Activated B cell treated with CpG ODN at 0.5 μM for 24 hours (primary cell): ENCODE measurements at regions of chr7 and their contacts with region 1.

Region 1: DNA sequence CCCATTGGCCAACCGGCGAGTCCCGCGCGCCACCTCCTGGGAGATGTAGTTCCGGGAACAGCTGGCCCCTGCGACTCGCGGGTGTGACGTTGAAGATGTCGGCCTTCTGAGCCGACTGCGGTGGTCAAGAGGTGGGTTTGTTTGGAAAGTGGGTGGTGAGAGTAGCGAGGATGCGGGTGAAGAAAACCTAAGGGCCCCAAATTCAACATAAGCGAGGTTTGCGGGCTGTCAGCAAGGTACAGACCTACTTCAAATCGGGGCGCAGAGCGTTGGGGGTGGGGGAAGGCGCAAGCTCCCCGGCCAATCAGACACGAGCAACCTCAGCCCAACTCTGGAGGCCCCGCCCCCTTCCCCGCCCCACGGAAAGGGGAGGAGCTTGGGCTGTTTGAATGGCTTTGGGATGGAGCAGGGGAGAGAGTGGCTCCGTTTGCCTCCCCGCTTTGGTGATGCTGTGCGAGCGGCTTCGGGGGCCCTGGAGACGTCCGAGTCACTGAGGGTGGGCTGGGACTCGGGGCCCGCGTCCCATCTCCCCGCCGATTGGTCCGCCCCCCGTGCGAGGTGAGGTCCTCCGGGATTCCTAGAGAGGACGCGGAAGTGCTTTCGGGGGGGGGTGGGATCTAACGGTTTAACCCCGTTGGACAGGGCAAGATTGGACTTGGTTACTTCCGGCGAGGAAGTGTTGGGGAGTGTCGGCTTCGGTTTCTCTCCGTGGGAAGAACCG is at the start of gene ZKSCAN5:
- DNase-seq: peak; percentile 93
- ATAC-seq: peak; percentile 84
- H3K4me3 Mint-ChIP-seq: peak within 1 kb of the TSS; percentile 98
- H3K27ac Mint-ChIP-seq: peak within 1 kb of the TSS; percentile 98
- H3K4me1 Mint-ChIP-seq: peaks cover 38% of the 10 kb centered on the region
- H3K27me3 Mint-ChIP-seq: no peaks in the 10 kb centered on the region
- CTCF ChIP-seq: no peak
- total RNA-seq, gene ZKSCAN5: 9.5 and 10.3 TPM in 2 replicates

Region 2: DNA sequence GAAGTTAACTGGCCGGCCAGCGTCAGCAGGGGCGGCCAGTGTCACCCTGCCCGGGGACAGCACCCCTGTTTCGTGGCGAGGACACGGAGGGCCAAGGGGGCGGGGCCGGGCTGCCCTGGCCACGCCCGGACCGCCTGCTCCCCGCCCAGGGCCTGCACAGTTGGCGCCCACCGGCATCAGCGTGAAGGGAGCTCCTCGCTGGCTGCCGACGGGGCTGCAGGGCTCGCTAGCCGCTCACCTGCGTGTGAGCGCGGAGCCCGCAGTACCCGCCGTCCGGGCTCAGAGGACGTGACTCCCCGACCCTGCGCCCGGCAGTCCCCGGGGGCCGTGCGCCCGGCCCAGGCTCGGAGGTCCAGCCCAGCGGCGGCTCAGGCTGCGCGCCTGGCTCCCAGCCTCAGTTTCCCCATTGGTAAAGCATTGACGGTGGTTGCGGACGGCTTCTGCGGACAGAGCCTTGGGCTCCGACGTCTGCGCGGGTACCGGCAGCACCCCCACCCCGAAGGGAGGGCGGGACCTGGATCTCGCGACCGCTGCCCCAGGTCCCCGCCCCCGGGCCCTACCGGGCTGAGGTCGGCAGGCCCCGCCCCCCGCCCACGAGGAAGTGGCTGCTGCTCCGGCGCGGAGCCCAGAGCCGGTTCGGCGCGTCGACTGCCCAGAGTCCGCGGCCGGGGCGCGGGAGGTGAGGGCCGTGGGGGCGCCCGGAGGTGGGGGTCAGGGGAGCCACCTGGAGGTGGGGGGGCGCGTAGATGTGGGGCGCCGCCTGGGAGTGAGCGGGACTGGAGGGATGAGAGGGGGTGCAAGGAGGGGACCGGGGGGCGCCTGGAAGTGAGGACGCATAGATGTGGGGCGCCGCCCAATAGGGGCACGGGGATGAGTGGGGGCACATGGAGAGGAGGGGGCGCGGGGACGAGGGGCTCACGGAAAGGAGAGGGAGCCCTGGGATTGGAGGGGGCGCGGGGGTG is 130.4 kb before region 1 on chr7 and contains the start of gene ARPC1B:
- CTCF ChIA-PET with region 1: no interaction called
- POLR2A ChIA-PET with region 1: interaction called, 6 read pairs
- intact Hi-C with region 1: loop called (anchors 2 kb)
- DNase-seq: peak; percentile 78
- ATAC-seq: peak; percentile 74
- H3K4me3 Mint-ChIP-seq: peak within 1 kb of the TSS; percentile 83
- H3K27ac Mint-ChIP-seq: peak within 1 kb of the TSS; percentile 79
- H3K4me1 Mint-ChIP-seq: peaks cover 33% of the 10 kb centered on the region
- H3K27me3 Mint-ChIP-seq: no peaks in the 10 kb centered on the region
- CTCF ChIP-seq: no peak
- total RNA-seq, gene ARPC1B: 300 and 312 TPM in 2 replicates

Region 3: DNA sequence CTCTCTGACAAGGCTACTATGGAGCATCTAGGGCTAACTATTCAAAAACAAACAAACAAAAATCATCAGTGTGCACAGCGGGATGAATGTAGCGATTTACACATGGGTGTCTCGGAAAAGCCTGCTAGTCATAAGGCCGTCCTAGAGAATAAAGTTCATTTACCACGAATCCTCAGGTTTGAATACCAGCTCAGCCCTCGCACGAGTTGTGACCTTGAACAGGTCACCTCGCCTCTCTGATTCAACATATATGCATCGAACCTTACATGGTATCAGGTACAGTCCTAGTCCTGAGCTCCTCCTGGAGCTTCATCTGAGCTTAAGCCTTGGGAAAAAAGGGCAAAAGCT is 39.4 kb before region 1 on chr7:
- CTCF ChIA-PET with region 1: no interaction called
- POLR2A ChIA-PET with region 1: interaction called, 26 read pairs
- intact Hi-C with region 1: loop called (anchors 1 kb)
- DNase-seq: no peak
- ATAC-seq: no peak
- H3K4me3 Mint-ChIP-seq: peak overlapping the region; percentile 96
- H3K27ac Mint-ChIP-seq: peak overlapping the region; percentile 90
- H3K4me1 Mint-ChIP-seq: peaks cover 36% of the 10 kb centered on the region
- H3K27me3 Mint-ChIP-seq: no peaks in the 10 kb centered on the region
- CTCF ChIP-seq: no peak

Region 4: DNA sequence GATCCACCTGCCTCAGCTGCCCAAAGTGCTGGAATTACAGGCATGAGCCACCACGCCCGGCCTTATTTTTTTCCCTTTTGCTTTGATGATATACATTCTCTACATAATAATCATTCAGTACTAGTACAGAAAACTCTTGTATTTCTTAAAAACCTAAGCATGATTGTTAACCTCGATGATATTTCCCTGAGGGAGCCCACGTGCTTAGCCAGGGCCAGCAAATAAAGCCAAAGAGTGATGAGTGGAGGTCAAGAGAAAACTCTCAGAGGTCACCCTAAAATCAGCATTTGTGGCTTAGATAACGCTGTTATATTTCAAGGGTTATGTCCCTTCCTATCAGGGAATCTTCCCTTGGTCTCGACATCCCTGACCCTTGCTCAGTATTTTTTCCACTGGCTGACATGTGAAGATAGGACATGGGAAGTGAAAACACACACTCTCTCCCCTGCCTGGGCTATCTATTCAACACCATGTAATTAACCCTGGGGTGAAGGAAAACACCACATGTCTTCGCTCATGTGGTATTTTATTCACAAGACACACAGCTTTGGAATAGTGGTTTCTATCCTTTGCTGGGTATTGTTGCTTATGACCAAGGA is 34.5 kb after region 1 on chr7:
- CTCF ChIA-PET with region 1: no interaction called
- POLR2A ChIA-PET with region 1: no interaction called
- intact Hi-C with region 1: no loop called
- DNase-seq: no peak
- ATAC-seq: no peak
- H3K4me3 Mint-ChIP-seq: no peak overlapping the region
- H3K27ac Mint-ChIP-seq: no peak overlapping the region
- H3K4me1 Mint-ChIP-seq: no peaks in the 10 kb centered on the region
- H3K27me3 Mint-ChIP-seq: no peaks in the 10 kb centered on the region
- CTCF ChIP-seq: no peak

Region 5: GRCh38 chr7:99551767-99552463 is 47.2 kb after region 1 on chr7 and contains the start of gene FAM200A:
- CTCF ChIA-PET with region 1: interaction called, 3 read pairs
- POLR2A ChIA-PET with region 1: interaction called, 69 read pairs
- intact Hi-C with region 1: loop called (anchors 1 kb)
- DNase-seq: peak; percentile 78
- ATAC-seq: peak; percentile 98
- H3K4me3 Mint-ChIP-seq: peak within 1 kb of the TSS; percentile 91
- H3K27ac Mint-ChIP-seq: peak within 1 kb of the TSS; percentile 87
- H3K4me1 Mint-ChIP-seq: peaks cover 33% of the 10 kb centered on the region
- H3K27me3 Mint-ChIP-seq: no peaks in the 10 kb centered on the region
- CTCF ChIP-seq: no peak
- total RNA-seq, gene FAM200A: 9.2 and 9.3 TPM in 2 replicates

Region 6: DNA sequence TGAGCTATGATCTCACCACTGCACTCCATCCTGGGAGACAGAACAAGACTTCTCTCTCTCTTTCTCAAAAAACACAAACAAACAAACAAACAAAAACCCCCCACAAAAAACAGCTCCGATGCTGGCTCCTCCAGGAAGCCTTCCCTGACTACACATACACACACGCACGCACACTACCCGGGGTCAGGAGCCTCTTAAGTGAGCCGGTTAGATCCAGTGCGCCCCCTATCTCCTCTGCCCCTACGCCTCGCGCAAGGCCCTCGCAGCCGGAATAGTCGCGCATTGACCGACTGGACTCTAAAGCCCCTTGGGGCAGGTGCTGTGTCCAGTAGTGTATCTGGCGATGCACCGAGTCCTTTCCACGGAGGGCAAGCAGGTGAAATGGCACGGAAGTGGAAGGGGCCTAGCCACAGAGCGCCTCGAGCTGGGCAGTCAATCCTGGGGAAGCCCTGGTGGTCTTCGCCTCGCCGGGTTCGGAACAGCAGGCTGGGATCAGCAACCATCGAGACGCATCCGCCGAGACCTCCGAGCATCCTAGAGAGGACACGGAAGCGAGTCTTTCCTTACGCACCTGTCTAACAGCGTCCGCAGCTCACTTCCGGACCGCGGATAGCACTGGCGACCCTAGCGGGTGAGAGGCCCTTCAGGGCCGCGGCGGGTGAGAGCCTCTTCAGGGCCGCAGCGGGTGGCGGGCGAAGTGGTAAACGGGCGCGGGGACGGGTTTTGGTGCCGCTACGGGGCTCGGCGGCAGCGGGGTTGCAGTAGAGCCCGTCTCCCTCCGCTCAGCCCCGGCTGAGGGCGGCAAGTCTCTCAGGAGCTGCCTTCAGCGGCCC is 111.8 kb after region 1 on chr7 and contains the start of gene ZSCAN25:
- CTCF ChIA-PET with region 1: interaction called, 4 read pairs
- POLR2A ChIA-PET with region 1: interaction called, 15 read pairs
- intact Hi-C with region 1: loop called (anchors 1 kb)
- DNase-seq: peak; percentile 78
- ATAC-seq: peak; percentile 95
- H3K4me3 Mint-ChIP-seq: peak within 1 kb of the TSS; percentile 97
- H3K27ac Mint-ChIP-seq: peak within 1 kb of the TSS; percentile 90
- H3K4me1 Mint-ChIP-seq: peaks cover 30% of the 10 kb centered on the region
- H3K27me3 Mint-ChIP-seq: no peaks in the 10 kb centered on the region
- CTCF ChIP-seq: no peak
- total RNA-seq, gene ZSCAN25: 28.5 and 33.4 TPM in 2 replicates

Region 7: GRCh38 chr7:99740573-99741440 is 236.0 kb after region 1 on chr7:
- CTCF ChIA-PET with region 1: no interaction called
- POLR2A ChIA-PET with region 1: no interaction called
- intact Hi-C with region 1: no loop called
- DNase-seq: no peak
- ATAC-seq: no peak
- H3K4me3 Mint-ChIP-seq: no peak overlapping the region
- H3K27ac Mint-ChIP-seq: no peak overlapping the region
- H3K4me1 Mint-ChIP-seq: no peaks in the 10 kb centered on the region
- H3K27me3 Mint-ChIP-seq: peaks cover 36% of the 10 kb centered on the region
- CTCF ChIP-seq: no peak

Region 8: GRCh38 chr7:100015232-100016209 is 510.8 kb after region 1 on chr7 and contains the start of gene ZKSCAN1:
- CTCF ChIA-PET with region 1: no interaction called
- POLR2A ChIA-PET with region 1: interaction called, 3 read pairs
- intact Hi-C with region 1: loop called (anchors 2 kb)
- DNase-seq: peak; percentile 76
- ATAC-seq: peak; percentile 97
- H3K4me3 Mint-ChIP-seq: peak within 1 kb of the TSS; percentile 90
- H3K27ac Mint-ChIP-seq: peak within 1 kb of the TSS; percentile 84
- H3K4me1 Mint-ChIP-seq: peaks cover 34% of the 10 kb centered on the region
- H3K27me3 Mint-ChIP-seq: peaks cover 6% of the 10 kb centered on the region
- CTCF ChIP-seq: no peak
- total RNA-seq, gene ZKSCAN1: 59.0 and 70.6 TPM in 2 replicates

Region 9: GRCh38 chr7:101251871-101252659 is 1747.3 kb after region 1 on chr7:
- CTCF ChIA-PET with region 1: no interaction called
- POLR2A ChIA-PET with region 1: no interaction called
- intact Hi-C with region 1: loop called (anchors 5 kb)
- DNase-seq: peak; percentile 98
- ATAC-seq: peak; percentile 100
- H3K4me3 Mint-ChIP-seq: peak overlapping the region; percentile 100
- H3K27ac Mint-ChIP-seq: peak overlapping the region; percentile 96
- H3K4me1 Mint-ChIP-seq: peaks cover 29% of the 10 kb centered on the region
- H3K27me3 Mint-ChIP-seq: peaks cover 8% of the 10 kb centered on the region
- CTCF ChIP-seq: no peak